ENCODE measurements at regions of chr17 and their contacts with region 1.

Region 1: GRCh38 chr17:32609085-32609484 is 122.3 kb downstream of the CDK5R1 start:
- DNase-seq: peak; percentile 59
- ATAC-seq: peak; percentile 100
- H3K4me3 ChIP-seq: no peak overlapping the region
- H3K27ac ChIP-seq: no peak overlapping the region
- H3K4me1 ChIP-seq: peaks cover 7% of the 10 kb centered on the region
- H3K27me3 ChIP-seq: no peaks in the 10 kb centered on the region
- CTCF ChIP-seq: peak; percentile 73 to 88 (median 78)
- EP300 ChIP-seq: no peak; a peak in 1 of 4 replicates
- POLR2A ChIP-seq: no peak
- RAD21 ChIP-seq: peak; percentile 88

Region 2: GRCh38 chr17:32596628-32597027 is 12.5 kb before region 1 on chr17:
- CTCF ChIA-PET with region 1: interaction called, 23 read pairs
- POLR2A ChIA-PET with region 1: no interaction called
- RAD21 ChIA-PET with region 1: interaction called, 9 read pairs
- SMC1A ChIA-PET with region 1: interaction called, 7 read pairs
- in situ Hi-C with region 1: no loop called
- intact Hi-C with region 1: no loop called
- DNase-seq: peak; percentile 62
- ATAC-seq: peak; percentile 98
- H3K4me3 ChIP-seq: no peak overlapping the region
- H3K27ac ChIP-seq: no peak overlapping the region
- H3K4me1 ChIP-seq: peaks cover 15% of the 10 kb centered on the region
- H3K27me3 ChIP-seq: no peaks in the 10 kb centered on the region
- CTCF ChIP-seq: no peak
- EP300 ChIP-seq: no peak
- POLR2A ChIP-seq: no peak
- RAD21 ChIP-seq: no peak

Measured in GM12878 (cell line).